ENCODE measurements at regions of chr5 and their contacts with region 1.

Region 1: GRCh38 chr5:132746954-132747615 is at the start of gene CCNI2:
- DNase-seq: peak; percentile 62
- H3K4me3 Mint-ChIP-seq: peak within 1 kb of the TSS; percentile 69
- H3K27ac Mint-ChIP-seq: peak within 1 kb of the TSS; percentile 76
- H3K4me1 Mint-ChIP-seq: peaks cover 28% of the 10 kb centered on the region
- H3K27me3 Mint-ChIP-seq: peaks cover 17% of the 10 kb centered on the region
- total RNA-seq, gene CCNI2: 5.5 to 6.2 TPM

Region 2: GRCh38 chr5:132758451-132758850 is 11.4 kb after region 1 on chr5:
- CTCF ChIA-PET with region 1: interaction called, 11 read pairs
- POLR2A ChIA-PET with region 1: no interaction called
- DNase-seq: no peak
- H3K4me3 Mint-ChIP-seq: no peak overlapping the region
- H3K27ac Mint-ChIP-seq: no peak overlapping the region
- H3K4me1 Mint-ChIP-seq: peaks cover 14% of the 10 kb centered on the region
- H3K27me3 Mint-ChIP-seq: no peaks in the 10 kb centered on the region

Region 3: DNA sequence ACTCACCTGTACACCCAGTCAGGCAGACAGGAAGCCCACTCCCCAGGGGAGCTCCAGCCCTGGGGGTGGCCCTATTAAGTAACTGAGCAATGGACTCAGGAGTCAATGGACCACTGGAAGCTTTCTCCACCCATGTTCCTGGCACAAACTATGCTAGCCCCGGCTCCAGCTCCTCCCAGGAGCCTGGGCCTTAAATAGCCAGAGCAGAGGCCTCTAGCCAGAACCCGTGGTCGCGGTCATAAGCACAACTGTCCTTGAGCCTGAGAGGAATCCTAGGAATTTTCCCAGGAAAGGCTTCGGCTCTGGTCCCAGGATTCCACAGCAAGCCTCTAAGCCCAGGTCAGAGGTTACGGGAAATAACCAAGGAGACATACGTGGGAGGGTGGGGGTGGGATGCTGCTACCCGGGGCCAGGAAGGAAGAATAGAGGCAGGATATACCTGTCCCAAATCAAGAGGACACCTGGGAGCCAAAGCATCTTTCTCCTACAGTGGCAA is 24.5 kb after region 1 on chr5:
- CTCF ChIA-PET with region 1: no interaction called
- POLR2A ChIA-PET with region 1: no interaction called
- DNase-seq: no peak
- H3K4me3 Mint-ChIP-seq: no peak overlapping the region
- H3K27ac Mint-ChIP-seq: no peak overlapping the region
- H3K4me1 Mint-ChIP-seq: peaks cover 5% of the 10 kb centered on the region
- H3K27me3 Mint-ChIP-seq: peaks cover 8% of the 10 kb centered on the region